Activated CD4-positive, alpha-beta T cell treated with anti-CD3 and anti-CD28 coated beads, Interleukin-2, amount 10 ng/mL, durations not matched to agents 24 days and 14 days (primary cell): ENCODE measurements at regions of chr12 and their contacts with region 1.

Region 1: DNA sequence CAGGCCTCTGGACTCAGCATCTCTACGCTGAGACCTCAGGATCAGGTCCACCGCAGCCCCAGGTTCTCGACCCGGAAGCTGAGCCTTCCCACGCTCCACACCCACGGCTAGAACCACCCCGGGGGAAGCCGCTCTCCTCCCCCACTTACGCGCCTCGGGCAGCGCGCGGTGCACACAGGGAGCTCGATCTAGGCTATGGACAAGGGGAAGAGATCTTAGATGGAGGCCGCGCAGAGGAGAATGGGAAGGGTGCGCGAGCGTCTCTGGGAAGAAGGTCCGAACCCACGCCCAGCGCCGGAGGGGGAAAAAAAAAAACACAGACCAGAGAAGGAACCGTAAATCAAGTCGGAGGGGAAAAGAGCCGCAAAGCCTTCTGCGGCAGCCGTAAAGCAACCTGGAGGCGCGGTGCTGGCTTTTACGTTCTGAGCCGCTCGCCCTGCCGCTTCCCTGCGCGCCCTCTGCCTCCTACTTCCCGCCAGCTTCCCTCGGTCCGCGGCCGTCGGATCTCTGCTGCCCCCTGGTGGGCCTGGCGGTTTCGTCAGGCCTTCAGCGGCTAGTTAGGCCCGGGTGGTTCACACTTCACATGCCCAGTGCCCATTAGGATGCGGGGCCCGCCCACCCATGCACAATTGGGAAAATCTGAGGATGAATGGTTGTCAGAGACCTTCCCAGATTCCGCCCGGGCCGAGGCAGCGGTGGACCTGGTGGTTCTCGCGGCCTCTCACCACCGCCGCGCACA is at the start of gene RAD52:
- DNase-seq: peak; percentile 99
- H3K4me3 Mint-ChIP-seq: peak within 1 kb of the TSS; percentile 97
- H3K27ac Mint-ChIP-seq: peak within 1 kb of the TSS; percentile 96
- H3K4me1 Mint-ChIP-seq: peaks cover 25% of the 10 kb centered on the region
- H3K27me3 Mint-ChIP-seq: peaks cover 5% of the 10 kb centered on the region
- total RNA-seq, gene RAD52: 15.2 and 15.7 TPM in 2 replicates

Region 2: DNA sequence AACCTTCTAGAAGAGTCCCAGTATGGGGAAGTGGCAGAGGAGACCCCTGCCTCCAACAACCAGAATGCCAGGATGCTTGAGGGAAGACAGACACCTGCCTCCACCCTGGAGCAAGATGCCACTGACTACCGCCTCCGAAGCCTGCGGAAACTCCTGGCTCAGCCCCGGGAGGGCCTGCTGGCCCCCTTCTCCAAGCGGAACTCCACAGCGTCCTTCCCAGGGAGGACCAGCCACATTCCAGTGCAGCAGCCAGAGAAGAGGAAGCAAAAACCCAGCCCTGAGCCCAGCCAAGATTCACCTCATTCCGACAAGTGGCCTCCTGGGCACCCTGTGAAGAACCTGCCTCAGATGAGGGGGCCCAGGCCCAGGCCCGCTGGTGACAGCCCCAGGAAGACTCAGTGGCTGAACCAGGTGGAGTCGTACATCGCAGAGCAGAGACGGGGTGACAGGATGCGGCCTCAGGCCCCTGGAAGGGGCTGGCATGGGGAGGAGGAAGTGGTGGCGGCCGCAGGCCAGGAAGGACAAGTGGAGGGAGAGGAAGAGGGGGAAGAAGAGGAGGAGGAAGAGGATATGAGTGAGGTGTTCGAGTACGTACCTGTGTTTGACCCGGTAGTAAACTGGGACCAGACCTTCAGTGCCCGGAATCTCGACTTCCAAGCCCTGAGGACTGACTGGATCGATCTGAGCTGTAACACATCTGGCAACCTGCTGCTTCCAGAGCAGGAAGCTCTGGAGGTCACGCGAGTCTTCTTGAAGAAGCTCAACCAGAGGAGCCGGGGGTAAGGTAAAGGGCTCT is 396.2 kb before region 1 on chr12:
- intact Hi-C with region 1: loop called (anchors 1 kb)
- DNase-seq: peak; percentile 91
- H3K4me3 Mint-ChIP-seq: peak overlapping the region; percentile 96
- H3K27ac Mint-ChIP-seq: peak overlapping the region; percentile 96
- H3K4me1 Mint-ChIP-seq: peaks cover 42% of the 10 kb centered on the region
- H3K27me3 Mint-ChIP-seq: no peaks in the 10 kb centered on the region

Region 3: GRCh38 chr12:630656-631632 is 318.7 kb before region 1 on chr12:
- intact Hi-C with region 1: loop called (anchors 5 kb)
- DNase-seq: peak; percentile 96
- H3K4me3 Mint-ChIP-seq: peak overlapping the region; percentile 93
- H3K27ac Mint-ChIP-seq: peak overlapping the region; percentile 99
- H3K4me1 Mint-ChIP-seq: peaks cover 42% of the 10 kb centered on the region
- H3K27me3 Mint-ChIP-seq: no peaks in the 10 kb centered on the region

Region 4: GRCh38 chr12:751192-751998 is 198.2 kb before region 1 on chr12:
- intact Hi-C with region 1: loop called (anchors 1 kb)
- DNase-seq: peak; percentile 96
- H3K4me3 Mint-ChIP-seq: no peak overlapping the region
- H3K27ac Mint-ChIP-seq: no peak overlapping the region
- H3K4me1 Mint-ChIP-seq: peaks cover 21% of the 10 kb centered on the region
- H3K27me3 Mint-ChIP-seq: no peaks in the 10 kb centered on the region

Region 5: DNA sequence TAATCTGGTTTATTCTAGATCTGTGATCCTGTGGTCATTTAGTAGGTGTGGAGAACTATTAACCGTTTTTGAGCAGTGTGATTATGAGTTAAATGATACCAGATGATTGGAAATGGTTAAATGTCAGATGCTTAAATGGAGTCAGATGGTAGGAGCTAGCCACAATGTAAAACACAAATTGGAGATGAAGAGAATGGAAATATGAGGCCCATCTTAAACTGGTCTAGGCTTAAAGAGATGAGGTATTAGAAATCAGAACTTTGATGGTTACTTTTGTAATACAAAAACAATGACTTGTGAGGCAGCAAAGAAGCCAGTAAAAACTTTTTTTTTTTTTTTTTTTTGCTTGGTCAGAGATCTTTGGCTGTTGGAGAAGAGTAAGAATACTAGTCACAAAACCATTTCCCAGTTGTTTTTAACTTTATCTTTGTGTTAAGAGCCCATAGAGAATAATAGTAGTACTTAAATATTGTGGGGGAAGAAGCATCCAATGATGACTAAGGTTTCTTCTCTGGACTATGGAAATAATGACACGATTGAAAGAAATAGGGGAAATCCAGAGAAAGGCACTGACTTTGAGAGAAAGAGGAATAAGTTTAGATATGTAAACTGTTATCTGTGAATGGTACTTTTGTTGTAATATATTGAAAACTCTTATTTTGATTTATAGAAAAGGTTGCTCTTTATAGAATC is 101.3 kb before region 1 on chr12:
- intact Hi-C with region 1: loop called (anchors 10 kb)
- DNase-seq: no peak
- H3K4me3 Mint-ChIP-seq: peak overlapping the region; percentile 14
- H3K27ac Mint-ChIP-seq: peak overlapping the region; percentile 87
- H3K4me1 Mint-ChIP-seq: peaks cover 34% of the 10 kb centered on the region
- H3K27me3 Mint-ChIP-seq: no peaks in the 10 kb centered on the region

Region 6: GRCh38 chr12:990661-991349 is 41.2 kb after region 1 on chr12 and contains the start of gene ERC1:
- intact Hi-C with region 1: loop called (anchors 1 kb)
- DNase-seq: peak; percentile 96
- H3K4me3 Mint-ChIP-seq: peak within 1 kb of the TSS; percentile 100
- H3K27ac Mint-ChIP-seq: peak within 1 kb of the TSS; percentile 99
- H3K4me1 Mint-ChIP-seq: peaks cover 36% of the 10 kb centered on the region
- H3K27me3 Mint-ChIP-seq: peaks cover 2% of the 10 kb centered on the region
- total RNA-seq, gene ERC1: 30.8 and 31.6 TPM in 2 replicates

Region 7: DNA sequence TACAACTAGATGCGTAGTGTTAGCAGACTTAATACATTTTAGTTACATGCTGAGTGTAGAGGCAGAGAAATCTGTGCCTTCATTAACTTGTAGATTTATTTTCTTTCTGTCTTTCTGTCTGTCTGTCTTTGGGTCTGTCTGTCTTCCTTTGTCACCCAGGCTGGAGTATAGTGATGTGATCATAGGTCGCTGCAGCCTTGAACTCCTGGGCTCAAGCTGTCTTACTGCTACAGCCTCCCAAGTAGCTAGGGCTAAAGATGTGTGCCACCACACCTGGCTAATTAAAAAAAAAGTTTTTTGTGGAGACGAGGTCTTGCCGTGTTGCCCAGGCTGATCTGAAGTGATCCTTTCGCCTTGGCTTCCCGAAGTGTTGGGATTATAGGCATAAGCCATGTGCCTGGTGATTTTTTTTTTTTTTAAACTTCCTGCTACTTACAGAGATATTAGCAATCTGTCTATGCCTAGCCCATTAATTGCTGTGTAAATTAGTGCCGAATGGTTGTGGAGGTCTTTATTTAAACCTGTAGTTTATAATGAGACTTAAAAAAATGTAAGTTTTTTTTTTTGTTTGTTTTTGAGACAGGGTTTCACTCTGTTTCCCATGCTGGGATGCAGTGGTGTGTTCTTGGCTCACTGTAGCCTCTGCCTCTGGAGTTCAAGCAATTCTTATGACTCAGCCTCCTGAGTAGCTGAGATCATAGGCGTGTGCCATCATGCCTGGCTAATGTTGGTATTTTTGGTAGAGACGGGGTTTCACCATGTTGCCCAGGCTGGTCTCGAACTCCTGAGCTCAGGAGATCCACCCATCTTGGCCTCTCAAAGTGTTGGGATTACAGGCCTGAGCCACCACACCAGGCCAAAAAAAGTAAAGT is 64.2 kb after region 1 on chr12:
- intact Hi-C with region 1: no loop called
- DNase-seq: no peak
- H3K4me3 Mint-ChIP-seq: no peak overlapping the region
- H3K27ac Mint-ChIP-seq: no peak overlapping the region
- H3K4me1 Mint-ChIP-seq: peaks cover 3% of the 10 kb centered on the region
- H3K27me3 Mint-ChIP-seq: no peaks in the 10 kb centered on the region

Region 8: DNA sequence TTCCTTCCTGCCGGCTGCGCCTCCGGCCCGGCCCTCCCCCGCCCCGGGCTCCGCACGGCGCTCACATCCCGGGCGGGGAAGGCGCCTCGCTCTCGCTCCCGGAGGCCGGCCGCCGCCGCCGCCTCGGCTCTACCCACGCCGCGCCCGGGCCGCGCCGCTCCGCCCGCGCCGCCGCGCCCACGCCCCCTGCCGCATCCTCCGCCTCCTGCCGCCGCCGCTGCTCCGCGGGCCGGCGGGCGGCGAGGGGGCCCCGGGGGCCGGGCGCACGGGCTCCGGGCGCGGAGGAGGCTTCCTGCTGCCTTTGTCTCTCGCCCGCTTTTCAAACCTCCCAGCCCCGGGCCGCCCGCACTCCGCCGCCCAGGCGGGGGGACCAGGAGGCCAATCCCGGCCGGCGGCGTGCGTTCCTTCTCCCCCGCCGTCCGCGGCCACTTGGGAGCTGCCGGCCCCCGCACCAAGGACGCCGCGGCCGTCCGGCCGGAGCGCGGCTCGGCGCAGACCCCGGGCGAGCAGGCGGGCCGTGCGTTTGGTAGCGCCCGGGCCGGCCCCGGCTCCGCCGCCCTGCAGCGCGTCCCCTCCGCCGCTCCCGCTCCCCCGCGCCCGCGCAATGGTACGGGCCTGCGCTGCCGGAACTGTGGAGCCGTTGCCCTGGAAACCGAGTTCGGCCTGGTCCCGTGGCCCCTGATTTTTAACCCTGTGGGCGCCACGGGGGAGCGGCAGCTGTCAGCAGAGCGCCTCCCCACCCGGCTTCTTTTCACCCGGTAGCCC is 644.8 kb after region 1 on chr12 and contains the start of gene FBXL14:
- intact Hi-C with region 1: loop called (anchors 2 kb)
- DNase-seq: peak; percentile 97
- H3K4me3 Mint-ChIP-seq: peak within 1 kb of the TSS; percentile 99
- H3K27ac Mint-ChIP-seq: peak within 1 kb of the TSS; percentile 96
- H3K4me1 Mint-ChIP-seq: peaks cover 40% of the 10 kb centered on the region
- H3K27me3 Mint-ChIP-seq: no peaks in the 10 kb centered on the region
- total RNA-seq, gene FBXL14: 17.4 and 18.8 TPM in 2 replicates